ENCODE measurements at regions of chr17 and their contacts with region 1.

Region 1: DNA sequence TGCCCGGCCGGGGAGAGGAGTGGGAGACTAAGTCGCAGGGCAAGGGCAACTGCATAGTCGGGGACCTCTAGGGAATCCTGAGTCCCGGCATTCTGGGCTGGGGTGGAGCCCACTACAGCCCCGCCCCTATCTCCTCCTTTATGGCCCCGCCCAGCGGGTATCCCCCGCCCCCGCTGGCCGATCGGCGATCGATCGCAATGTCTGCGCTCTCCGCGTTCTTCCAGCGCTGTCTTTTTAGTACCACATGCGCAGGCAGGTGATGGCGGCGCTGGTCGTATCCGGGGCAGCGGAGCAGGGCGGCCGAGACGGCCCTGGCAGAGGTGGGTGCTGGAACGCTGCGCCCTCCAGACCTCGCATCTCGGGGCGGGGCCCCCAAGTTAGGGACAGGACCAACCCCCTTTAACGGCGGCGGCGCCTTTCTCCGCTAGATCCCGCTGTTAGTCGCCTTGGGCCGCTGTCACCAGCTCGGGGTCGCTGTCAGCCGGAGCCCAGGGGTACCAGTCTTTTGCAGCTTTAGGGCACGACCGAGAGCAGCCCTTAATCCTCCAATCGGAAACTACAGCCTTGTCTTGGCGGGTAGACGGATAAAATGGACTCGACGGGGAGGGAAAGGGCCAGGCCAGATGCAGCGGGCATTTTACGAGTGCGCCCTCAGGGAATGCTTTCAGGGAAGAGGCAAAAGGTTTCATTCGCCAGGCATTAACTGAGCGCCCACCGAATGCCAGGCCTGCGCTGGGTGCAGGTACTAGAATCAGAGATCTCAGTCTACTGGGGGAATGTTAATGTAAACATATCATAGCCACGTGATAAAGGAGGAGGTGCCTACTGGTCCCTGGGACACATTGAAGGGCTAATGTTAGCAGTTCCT is at the start of gene DPH1:
- DNase-seq: peak; percentile 96
- H3K4me3 ChIP-seq: peak within 1 kb of the TSS; percentile 99 to 100
- H3K27ac ChIP-seq: peak within 1 kb of the TSS; percentile 56 to 64; a peak in 3 of 4 replicates
- H3K4me1 ChIP-seq: peaks cover 5 to 14% of the 10 kb centered on the region in 2 experiments; a peak in 2 of 4 replicates
- H3K27me3 ChIP-seq: peaks cover 7% of the 10 kb centered on the region; the same call in 1 of the 2 replicates
- CTCF ChIP-seq: no peak
- EP300 ChIP-seq: no peak
- RAD21 ChIP-seq: no peak; the same call in 1 of the 2 replicates
- polyA plus RNA-seq, gene DPH1: 36.2 and 39.5 TPM in 2 replicates

Region 2: GRCh38 chr17:1716076-1716995 is 313.8 kb before region 1 on chr17:
- CTCF ChIA-PET with region 1: interaction called, 10 read pairs
- POLR2A ChIA-PET with region 1: no interaction called
- DNase-seq: peak; percentile 100
- H3K4me3 ChIP-seq: peak overlapping the region; percentile 85 to 95
- H3K27ac ChIP-seq: peak overlapping the region; percentile 99 to 100
- H3K4me1 ChIP-seq: peaks cover 12 to 31% of the 10 kb centered on the region in 2 experiments; a peak in 3 of 4 replicates
- H3K27me3 ChIP-seq: no peaks in the 10 kb centered on the region
- CTCF ChIP-seq: peak; percentile 11; the same call in 1 of the 2 replicates
- EP300 ChIP-seq: no peak
- RAD21 ChIP-seq: no peak

Region 3: DNA sequence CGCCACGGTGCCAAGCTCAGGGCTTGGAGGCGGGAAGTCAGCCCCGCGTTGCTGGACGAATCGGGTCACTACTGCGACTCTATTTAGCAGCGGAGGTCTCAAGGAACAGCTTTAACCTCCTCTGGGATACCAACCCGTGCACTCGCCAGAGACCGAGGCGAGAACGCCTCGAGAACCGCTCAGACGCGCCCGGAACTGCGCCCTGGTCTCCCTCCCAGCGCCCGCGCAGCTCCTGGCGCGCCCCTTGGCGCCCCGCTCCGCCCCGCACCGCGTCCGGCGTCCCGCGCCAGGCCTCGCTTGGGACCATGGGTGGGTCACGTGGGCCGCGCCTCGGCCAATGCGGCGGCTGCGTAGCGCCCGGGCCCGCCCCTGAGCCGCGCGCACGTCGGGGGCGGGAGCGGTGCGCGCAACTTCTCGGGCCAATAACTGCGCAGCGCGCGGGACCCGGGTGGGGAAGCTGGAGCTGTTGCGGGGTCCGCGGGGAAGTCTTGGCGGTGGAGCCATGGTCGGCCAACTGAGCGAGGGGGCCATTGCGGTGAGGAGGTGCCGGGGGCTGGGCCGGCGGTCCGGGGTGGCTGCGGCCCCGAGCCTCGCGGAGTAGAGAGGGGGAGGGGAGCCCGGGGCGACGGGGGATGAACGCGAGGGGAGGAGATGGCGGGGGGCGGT is 200.4 kb before region 1 on chr17 and contains the starts of genes RPA1 and SMYD4:
- CTCF ChIA-PET with region 1: no interaction called
- POLR2A ChIA-PET with region 1: no interaction called
- DNase-seq: peak; percentile 99
- H3K4me3 ChIP-seq: peak within 1 kb of the TSS; percentile 61 to 71
- H3K27ac ChIP-seq: peak within 1 kb of the TSS; percentile 47 to 55; a peak in 2 of 4 replicates
- H3K4me1 ChIP-seq: peaks cover 0 to 4% of the 10 kb centered on the region in 2 experiments; a peak in 1 of 4 replicates
- H3K27me3 ChIP-seq: no peaks in the 10 kb centered on the region
- CTCF ChIP-seq: no peak
- EP300 ChIP-seq: no peak; a peak in 1 of 4 replicates
- RAD21 ChIP-seq: no peak
- polyA plus RNA-seq, gene RPA1: 47.2 and 53.7 TPM in 2 replicates
- polyA plus RNA-seq, gene SMYD4: 4.9 and 6.1 TPM in 2 replicates

Region 4: GRCh38 chr17:1908699-1909309 is 121.3 kb before region 1 on chr17:
- CTCF ChIA-PET with region 1: interaction called, 197 read pairs
- POLR2A ChIA-PET with region 1: interaction called, 11 read pairs
- DNase-seq: peak; percentile 91
- H3K4me3 ChIP-seq: peak overlapping the region in 1 of 2 experiments; percentile 48; a peak in 2 of 4 replicates
- H3K27ac ChIP-seq: no peak overlapping the region
- H3K4me1 ChIP-seq: peaks cover 0 to 19% of the 10 kb centered on the region in 2 experiments; a peak in 1 of 4 replicates
- H3K27me3 ChIP-seq: peaks cover 7% of the 10 kb centered on the region; the same call in 1 of the 2 replicates
- CTCF ChIP-seq: peak; percentile 73
- EP300 ChIP-seq: no peak
- RAD21 ChIP-seq: peak; percentile 97

Region 5: GRCh38 chr17:1920948-1921351 is 109.2 kb before region 1 on chr17:
- CTCF ChIA-PET with region 1: interaction called, 15 read pairs
- POLR2A ChIA-PET with region 1: no interaction called
- DNase-seq: no peak
- H3K4me3 ChIP-seq: no peak overlapping the region
- H3K27ac ChIP-seq: no peak overlapping the region
- H3K4me1 ChIP-seq: no peaks in the 10 kb centered on the region
- H3K27me3 ChIP-seq: no peaks in the 10 kb centered on the region
- CTCF ChIP-seq: no peak
- EP300 ChIP-seq: no peak
- RAD21 ChIP-seq: no peak

Region 6: DNA sequence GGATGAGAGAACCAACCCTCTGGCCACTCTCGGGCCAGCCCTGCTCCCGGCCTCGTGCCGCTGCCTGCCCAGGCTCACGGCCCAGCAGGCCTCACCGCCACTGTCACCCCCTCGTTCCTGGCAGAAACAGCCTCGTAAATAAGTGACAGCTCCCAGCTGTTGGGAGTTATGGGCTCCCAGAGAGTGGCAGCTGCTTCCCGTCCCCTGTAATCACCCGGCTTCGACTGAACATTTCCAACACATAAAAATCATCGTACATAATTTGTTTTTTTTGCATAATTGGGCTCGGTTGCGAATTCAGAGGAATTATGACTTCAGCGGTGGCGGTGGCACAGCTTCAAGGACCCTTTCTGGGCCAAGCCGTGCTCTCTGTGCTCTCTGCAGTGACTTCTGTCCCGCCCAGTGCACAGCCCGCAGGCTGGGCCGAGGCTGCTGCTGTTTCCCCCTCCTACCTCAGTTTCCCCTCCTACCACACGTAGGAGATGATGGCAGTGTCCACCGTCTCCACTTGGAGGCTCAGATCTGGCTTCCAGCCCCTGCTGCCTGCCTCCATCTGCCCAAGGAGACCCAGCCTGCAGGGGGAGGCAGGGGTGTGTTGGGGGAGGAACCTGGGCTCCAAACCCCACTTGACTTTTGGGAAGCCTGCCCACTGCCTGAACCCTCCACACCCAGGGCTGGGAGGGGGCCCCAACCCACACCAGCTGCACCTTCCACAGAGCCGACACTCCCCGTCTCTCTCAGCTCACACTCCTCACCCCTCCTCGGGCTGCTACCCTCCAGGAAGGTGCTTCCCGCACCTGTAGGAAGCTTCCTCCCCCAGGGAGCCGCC is 90.0 kb before region 1 on chr17:
- CTCF ChIA-PET with region 1: interaction called, 12 read pairs
- POLR2A ChIA-PET with region 1: no interaction called
- DNase-seq: peak; percentile 64
- H3K4me3 ChIP-seq: no peak overlapping the region
- H3K27ac ChIP-seq: no peak overlapping the region; a peak in 1 of 4 replicates
- H3K4me1 ChIP-seq: peaks cover 0 to 25% of the 10 kb centered on the region in 2 experiments; a peak in 1 of 4 replicates
- H3K27me3 ChIP-seq: no peaks in the 10 kb centered on the region
- CTCF ChIP-seq: no peak
- EP300 ChIP-seq: no peak
- RAD21 ChIP-seq: no peak

Region 7: GRCh38 chr17:2017274-2017941 is 12.7 kb before region 1 on chr17:
- CTCF ChIA-PET with region 1: interaction called, 31 read pairs
- POLR2A ChIA-PET with region 1: interaction called, 3 read pairs
- DNase-seq: no peak
- H3K4me3 ChIP-seq: no peak overlapping the region
- H3K27ac ChIP-seq: no peak overlapping the region
- H3K4me1 ChIP-seq: no peaks in the 10 kb centered on the region
- H3K27me3 ChIP-seq: peaks cover 28% of the 10 kb centered on the region
- CTCF ChIP-seq: no peak
- EP300 ChIP-seq: no peak
- RAD21 ChIP-seq: no peak

Measured in SK-N-SH (cell line).